ENCODE measurements at regions of chr11 and their contacts with region 1.

Region 1: GRCh38 chr11:76152086-76152681 is 54.1 kb downstream of the WNT11 start:
- DNase-seq: peak; percentile 67 to 80 (median 70)
- H3K4me3 ChIP-seq: peak overlapping the region in 1 of 3 experiments; percentile 73
- H3K4me3 Mint-ChIP-seq: peak overlapping the region; percentile 74 to 93
- H3K27ac ChIP-seq: no peak overlapping the region
- H3K27ac Mint-ChIP-seq: peak overlapping the region in 1 of 7 donors; percentile 54
- H3K4me1 ChIP-seq: peaks cover 10 to 12% of the 10 kb centered on the region in 2 donors
- H3K4me1 Mint-ChIP-seq: peaks cover 16% of the 10 kb centered on the region
- H3K27me3 ChIP-seq: no peaks in the 10 kb centered on the region
- H3K27me3 Mint-ChIP-seq: peaks cover 11 to 18% (median 15%) of the 10 kb centered on the region in 3 donors
- CTCF ChIP-seq: peak; percentile 94

Region 2: DNA sequence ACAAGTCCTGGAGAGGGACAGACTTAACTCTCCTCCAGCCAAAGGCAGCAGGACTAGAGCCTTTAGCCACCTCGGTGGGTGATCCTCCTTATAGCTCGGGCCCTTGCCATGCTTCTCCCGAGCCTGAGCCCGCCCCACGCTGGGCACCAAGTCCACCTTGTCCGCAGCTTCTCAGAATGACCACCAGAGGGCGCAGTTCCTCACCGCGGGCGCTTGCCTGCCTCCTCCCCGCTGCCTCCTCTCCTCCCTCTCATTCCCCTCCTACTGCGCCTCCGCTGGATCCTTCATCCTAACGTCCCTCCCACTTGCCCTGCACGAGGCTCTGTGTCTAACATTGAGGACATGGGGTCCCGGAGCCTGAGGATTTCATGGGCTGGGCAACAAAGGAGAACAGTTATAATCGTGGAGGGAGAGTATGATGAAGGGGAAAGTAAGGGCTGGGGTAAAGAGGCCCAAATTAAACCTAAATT is 445.9 kb before region 1 on chr11:
- intact Hi-C with region 1: loop called (anchors 10 kb)
- DNase-seq: peak; percentile 67 to 76 (median 69)
- H3K4me3 ChIP-seq: no peak overlapping the region
- H3K4me3 Mint-ChIP-seq: no peak overlapping the region
- H3K27ac ChIP-seq: no peak overlapping the region
- H3K27ac Mint-ChIP-seq: no peak overlapping the region
- H3K4me1 ChIP-seq: peaks cover 5 to 7% of the 10 kb centered on the region in 2 donors
- H3K4me1 Mint-ChIP-seq: peaks cover 8% of the 10 kb centered on the region
- H3K27me3 ChIP-seq: no peaks in the 10 kb centered on the region
- H3K27me3 Mint-ChIP-seq: peaks cover 3 to 8% (median 6%) of the 10 kb centered on the region in 3 donors
- CTCF ChIP-seq: peak; percentile 94

Region 3: GRCh38 chr11:75802913-75803820 is 349.0 kb before region 1 on chr11:
- intact Hi-C with region 1: loop called in 1 of 2 experiments (anchors 10 kb)
- DNase-seq: peak; percentile 66 to 76 (median 73)
- H3K4me3 ChIP-seq: no peak overlapping the region
- H3K4me3 Mint-ChIP-seq: no peak overlapping the region
- H3K27ac ChIP-seq: peak overlapping the region in 1 of 2 donors; percentile 22
- H3K27ac Mint-ChIP-seq: peak overlapping the region in 2 of 7 donors; percentile 48 to 87
- H3K4me1 ChIP-seq: peaks cover 24 to 32% of the 10 kb centered on the region in 2 donors
- H3K4me1 Mint-ChIP-seq: peaks cover 32% of the 10 kb centered on the region
- H3K27me3 ChIP-seq: no peaks in the 10 kb centered on the region
- H3K27me3 Mint-ChIP-seq: peaks cover 0 to 3% (median 0%) of the 10 kb centered on the region in 3 donors
- CTCF ChIP-seq: peak; percentile 92

Region 4: GRCh38 chr11:75896843-75897419 is 255.3 kb before region 1 on chr11:
- intact Hi-C with region 1: loop called (anchors 2 to 5 kb)
- DNase-seq: peak in 2 of 3 donors; percentile 18 to 51
- H3K4me3 ChIP-seq: no peak overlapping the region
- H3K4me3 Mint-ChIP-seq: no peak overlapping the region
- H3K27ac ChIP-seq: no peak overlapping the region
- H3K27ac Mint-ChIP-seq: no peak overlapping the region
- H3K4me1 ChIP-seq: peaks cover 27 to 43% of the 10 kb centered on the region in 2 donors
- H3K4me1 Mint-ChIP-seq: peaks cover 42% of the 10 kb centered on the region
- H3K27me3 ChIP-seq: no peaks in the 10 kb centered on the region
- H3K27me3 Mint-ChIP-seq: no peaks in the 10 kb centered on the region
- CTCF ChIP-seq: peak; percentile 82

Region 5: GRCh38 chr11:76637491-76638269 is 485.5 kb after region 1 on chr11:
- intact Hi-C with region 1: no loop called
- DNase-seq: peak; percentile 69 to 78 (median 77)
- H3K4me3 ChIP-seq: no peak overlapping the region
- H3K4me3 Mint-ChIP-seq: peak overlapping the region; percentile 18 to 68
- H3K27ac ChIP-seq: peak overlapping the region; percentile 10 to 45
- H3K27ac Mint-ChIP-seq: peak overlapping the region in 6 of 7 donors; percentile 79 to 92 (median 88)
- H3K4me1 ChIP-seq: peaks cover 15 to 18% of the 10 kb centered on the region in 2 donors
- H3K4me1 Mint-ChIP-seq: peaks cover 26% of the 10 kb centered on the region
- H3K27me3 ChIP-seq: peaks cover 0 to 2% of the 10 kb centered on the region in 2 donors
- H3K27me3 Mint-ChIP-seq: peaks cover 2 to 19% (median 5%) of the 10 kb centered on the region in 3 donors
- CTCF ChIP-seq: no peak